BJ (cell line): ENCODE measurements at regions of chr17 and their contacts with region 1.

Region 1: GRCh38 chr17:38853292-38854219 is at the start of gene RPL23:
- DNase-seq: peak; percentile 88
- H3K4me3 ChIP-seq: peak within 1 kb of the TSS; percentile 61
- H3K27me3 ChIP-seq: no peaks in the 10 kb centered on the region
- CTCF ChIP-seq: no peak
- polyA plus RNA-seq, gene RPL23: 1,440 and 2,342 TPM in 2 replicates

Region 2: GRCh38 chr17:38464723-38465390 is 388.7 kb before region 1 on chr17:
- CTCF ChIA-PET with region 1: no interaction called
- POLR2A ChIA-PET with region 1: no interaction called
- DNase-seq: peak; percentile 77
- H3K4me3 ChIP-seq: peak overlapping the region; percentile 45
- H3K27me3 ChIP-seq: no peaks in the 10 kb centered on the region
- CTCF ChIP-seq: no peak

Region 3: DNA sequence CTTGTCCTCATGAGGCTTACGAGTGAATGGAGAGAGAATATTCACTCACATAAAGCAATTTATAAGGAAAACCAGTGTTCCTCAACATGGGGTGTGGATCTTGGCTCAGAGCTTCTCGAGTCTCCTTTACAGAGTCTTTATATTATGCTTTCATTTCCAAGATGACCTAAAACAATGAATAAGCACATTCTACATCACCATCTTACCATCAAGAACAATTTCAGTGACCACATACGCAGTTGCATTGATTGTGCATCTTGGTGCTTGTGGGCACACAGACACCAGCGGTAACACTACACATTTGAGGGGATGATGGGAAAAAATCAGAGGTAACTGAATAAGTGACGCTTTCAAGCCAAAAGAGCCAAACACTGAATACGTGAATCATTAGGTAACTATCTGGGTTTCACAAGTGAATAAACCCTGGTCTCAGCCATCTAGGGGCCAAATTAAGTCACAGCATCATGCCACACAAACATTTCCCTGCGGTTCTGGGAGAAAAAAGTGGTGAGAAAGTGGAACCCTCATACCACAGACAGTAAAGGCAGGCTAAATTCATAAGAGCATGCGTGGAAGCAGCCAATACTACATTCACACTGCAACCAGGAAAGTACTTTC is 37.9 kb before region 1 on chr17:
- CTCF ChIA-PET with region 1: no interaction called
- POLR2A ChIA-PET with region 1: interaction called, 10 read pairs
- DNase-seq: no peak
- H3K4me3 ChIP-seq: no peak overlapping the region
- H3K27me3 ChIP-seq: no peaks in the 10 kb centered on the region
- CTCF ChIP-seq: peak; percentile 55

Region 4: GRCh38 chr17:38841141-38841485 is 12.4 kb before region 1 on chr17:
- CTCF ChIA-PET with region 1: interaction called, 4 read pairs
- POLR2A ChIA-PET with region 1: interaction called, 19 read pairs
- DNase-seq: no peak
- H3K4me3 ChIP-seq: peak overlapping the region; percentile 3
- H3K27me3 ChIP-seq: no peaks in the 10 kb centered on the region
- CTCF ChIP-seq: no peak